CD4-positive, alpha-beta T cell (primary cell): ENCODE measurements at regions of chr9 and their contacts with region 1.

Region 1: DNA sequence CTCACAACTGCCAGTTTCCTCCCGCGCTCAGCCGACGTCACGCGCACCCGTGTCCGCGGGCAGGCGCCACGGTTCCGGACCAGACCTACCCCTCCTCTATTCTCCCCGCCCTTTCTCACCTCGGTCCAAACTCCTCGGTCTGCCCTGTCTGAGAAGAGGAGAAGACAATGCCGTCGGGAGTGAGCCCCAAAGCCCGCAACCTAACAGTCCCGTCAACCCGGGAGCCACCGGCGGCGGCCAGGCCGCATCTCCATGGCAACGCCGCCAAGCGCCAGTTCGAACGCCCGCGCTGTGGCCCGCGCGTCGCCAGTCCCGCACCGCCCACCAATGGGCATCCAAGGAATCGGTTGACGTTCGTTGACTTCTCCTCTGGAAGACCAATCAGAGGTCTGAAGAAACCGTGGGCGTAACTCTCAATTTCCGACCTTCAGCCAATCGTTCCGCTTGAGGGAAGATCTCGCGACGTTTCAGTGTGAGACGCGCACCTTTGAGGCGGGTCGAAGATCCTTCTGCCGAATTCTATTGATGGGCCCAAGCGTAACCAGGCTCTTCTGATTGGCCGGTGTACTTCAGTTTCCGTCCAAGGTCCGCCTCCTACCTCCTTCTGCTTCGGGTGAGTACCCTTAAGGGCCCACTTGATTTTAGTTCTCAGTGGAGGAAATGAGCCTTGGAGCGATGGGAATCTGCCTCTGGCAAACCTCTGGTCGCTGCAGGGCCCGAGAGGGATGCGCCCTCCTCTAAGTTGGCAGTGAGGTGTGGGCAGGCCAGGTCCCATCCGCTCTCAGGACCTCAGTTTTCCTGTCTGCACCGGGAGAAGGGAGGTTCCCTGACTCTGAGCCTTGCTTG is at the starts of genes KIF24 and NUDT2:
- DNase-seq: peak; percentile 88 to 100 (median 92)
- ATAC-seq: peak; percentile 92
- H3K4me3 ChIP-seq: peak within 1 kb of the TSS; percentile 93
- H3K4me3 Mint-ChIP-seq: peak within 1 kb of the TSS; percentile 90
- H3K27ac ChIP-seq: peak within 1 kb of the TSS; percentile 76 to 86
- H3K27ac Mint-ChIP-seq: peak within 1 kb of the TSS; percentile 90
- H3K4me1 ChIP-seq: peaks cover 21% of the 10 kb centered on the region
- H3K4me1 Mint-ChIP-seq: peaks cover 42% of the 10 kb centered on the region
- H3K27me3 ChIP-seq: no peaks in the 10 kb centered on the region
- H3K27me3 Mint-ChIP-seq: no peaks in the 10 kb centered on the region
- CTCF ChIP-seq: no peak
- total RNA-seq, gene KIF24: 0.05 to 0.14 TPM
- total RNA-seq, gene NUDT2: 4.5 to 7.2 TPM

Region 2: GRCh38 chr9:34126207-34127034 is 202.8 kb before region 1 on chr9 and contains the start of gene DCAF12:
- CTCF ChIA-PET with region 1: no interaction called
- POLR2A ChIA-PET with region 1: no interaction called
- intact Hi-C with region 1: loop called in 1 of 2 experiments (anchors 2 kb)
- DNase-seq: peak; percentile 81 to 97 (median 88)
- ATAC-seq: peak; percentile 94
- H3K4me3 ChIP-seq: peak within 1 kb of the TSS; percentile 86
- H3K4me3 Mint-ChIP-seq: peak within 1 kb of the TSS; percentile 100
- H3K27ac ChIP-seq: peak within 1 kb of the TSS; percentile 86 to 88
- H3K27ac Mint-ChIP-seq: peak within 1 kb of the TSS; percentile 99
- H3K4me1 ChIP-seq: peaks cover 45% of the 10 kb centered on the region
- H3K4me1 Mint-ChIP-seq: peaks cover 57% of the 10 kb centered on the region
- H3K27me3 ChIP-seq: no peaks in the 10 kb centered on the region
- H3K27me3 Mint-ChIP-seq: no peaks in the 10 kb centered on the region
- CTCF ChIP-seq: no peak
- total RNA-seq, gene DCAF12: 5.4 to 5.9 TPM

Region 3: DNA sequence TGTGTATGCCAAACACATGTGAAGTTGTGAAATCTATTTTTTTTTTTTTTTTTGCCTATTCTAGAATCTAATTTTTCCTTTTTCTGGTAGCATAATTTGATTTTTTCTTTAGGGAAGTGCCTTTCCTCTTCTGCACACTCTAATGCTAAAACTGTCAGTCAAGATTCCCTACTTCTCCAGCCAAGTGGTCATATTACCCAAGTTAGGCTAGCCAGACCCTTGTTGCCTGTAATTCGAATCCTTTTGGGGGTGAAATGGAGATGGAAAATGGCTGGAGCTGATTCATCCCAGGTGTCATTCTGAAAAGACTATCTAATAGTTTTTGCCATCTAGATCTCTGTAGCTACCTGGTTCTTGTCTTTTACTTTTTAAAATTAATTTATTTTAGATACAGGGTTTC is 175.2 kb before region 1 on chr9:
- CTCF ChIA-PET with region 1: no interaction called
- POLR2A ChIA-PET with region 1: no interaction called
- intact Hi-C with region 1: no loop called
- DNase-seq: no peak
- ATAC-seq: no peak
- H3K4me3 ChIP-seq: no peak overlapping the region
- H3K4me3 Mint-ChIP-seq: no peak overlapping the region
- H3K27ac ChIP-seq: no peak overlapping the region
- H3K27ac Mint-ChIP-seq: no peak overlapping the region
- H3K4me1 ChIP-seq: no peaks in the 10 kb centered on the region
- H3K4me1 Mint-ChIP-seq: no peaks in the 10 kb centered on the region
- H3K27me3 ChIP-seq: no peaks in the 10 kb centered on the region
- H3K27me3 Mint-ChIP-seq: no peaks in the 10 kb centered on the region
- CTCF ChIP-seq: no peak

Region 4: GRCh38 chr9:34252670-34253459 is 76.3 kb before region 1 on chr9:
- CTCF ChIA-PET with region 1: no interaction called
- POLR2A ChIA-PET with region 1: no interaction called
- intact Hi-C with region 1: loop called (anchors 2 to 5 kb)
- DNase-seq: peak; percentile 36 to 81 (median 56)
- ATAC-seq: peak; percentile 75
- H3K4me3 ChIP-seq: no peak overlapping the region
- H3K4me3 Mint-ChIP-seq: no peak overlapping the region
- H3K27ac ChIP-seq: no peak overlapping the region
- H3K27ac Mint-ChIP-seq: peak overlapping the region; percentile 71
- H3K4me1 ChIP-seq: peaks cover 21% of the 10 kb centered on the region
- H3K4me1 Mint-ChIP-seq: peaks cover 25% of the 10 kb centered on the region
- H3K27me3 ChIP-seq: no peaks in the 10 kb centered on the region
- H3K27me3 Mint-ChIP-seq: no peaks in the 10 kb centered on the region
- CTCF ChIP-seq: peak; percentile 91

Region 5: GRCh38 chr9:34522971-34523797 is 194.0 kb after region 1 on chr9 and contains the start of gene ENHO:
- CTCF ChIA-PET with region 1: no interaction called
- POLR2A ChIA-PET with region 1: no interaction called
- intact Hi-C with region 1: loop called in 1 of 2 experiments (anchors 10 kb)
- DNase-seq: peak; percentile 75 to 96 (median 90)
- ATAC-seq: peak; percentile 98
- H3K4me3 ChIP-seq: peak within 1 kb of the TSS; percentile 55
- H3K4me3 Mint-ChIP-seq: peak within 1 kb of the TSS; percentile 69
- H3K27ac ChIP-seq: no peak within 1 kb of the TSS
- H3K27ac Mint-ChIP-seq: no peak within 1 kb of the TSS
- H3K4me1 ChIP-seq: peaks cover 16% of the 10 kb centered on the region
- H3K4me1 Mint-ChIP-seq: peaks cover 12% of the 10 kb centered on the region
- H3K27me3 ChIP-seq: no peaks in the 10 kb centered on the region
- H3K27me3 Mint-ChIP-seq: no peaks in the 10 kb centered on the region
- CTCF ChIP-seq: no peak
- total RNA-seq, gene ENHO: 0.45 TPM in 1 of 2 experiments, not detected in the other

Region 6: GRCh38 chr9:34611829-34612630 is 282.8 kb after region 1 on chr9 and contains the start of gene RPP25L:
- CTCF ChIA-PET with region 1: no interaction called
- POLR2A ChIA-PET with region 1: no interaction called
- intact Hi-C with region 1: loop called in 1 of 2 experiments (anchors 5 kb)
- DNase-seq: peak; percentile 64 to 94 (median 82)
- ATAC-seq: peak; percentile 91
- H3K4me3 ChIP-seq: peak within 1 kb of the TSS; percentile 95
- H3K4me3 Mint-ChIP-seq: peak within 1 kb of the TSS; percentile 84
- H3K27ac ChIP-seq: peak within 1 kb of the TSS; percentile 79 to 83
- H3K27ac Mint-ChIP-seq: peak within 1 kb of the TSS; percentile 40
- H3K4me1 ChIP-seq: peaks cover 28% of the 10 kb centered on the region
- H3K4me1 Mint-ChIP-seq: peaks cover 24% of the 10 kb centered on the region
- H3K27me3 ChIP-seq: no peaks in the 10 kb centered on the region
- H3K27me3 Mint-ChIP-seq: no peaks in the 10 kb centered on the region
- CTCF ChIP-seq: no peak
- total RNA-seq, gene RPP25L: 4.6 to 5.7 TPM

Region 7: GRCh38 chr9:34717996-34718614 is 388.9 kb after region 1 on chr9:
- CTCF ChIA-PET with region 1: no interaction called
- POLR2A ChIA-PET with region 1: no interaction called
- intact Hi-C with region 1: no loop called
- DNase-seq: no peak
- ATAC-seq: no peak
- H3K4me3 ChIP-seq: no peak overlapping the region
- H3K4me3 Mint-ChIP-seq: no peak overlapping the region
- H3K27ac ChIP-seq: no peak overlapping the region
- H3K27ac Mint-ChIP-seq: no peak overlapping the region
- H3K4me1 ChIP-seq: no peaks in the 10 kb centered on the region
- H3K4me1 Mint-ChIP-seq: no peaks in the 10 kb centered on the region
- H3K27me3 ChIP-seq: peaks cover 0 to 7% of the 10 kb centered on the region in 2 experiments
- H3K27me3 Mint-ChIP-seq: peaks cover 27% of the 10 kb centered on the region
- CTCF ChIP-seq: no peak